B cell (primary cell): ENCODE measurements at regions of chr5 and their contacts with region 1.

Region 1: DNA sequence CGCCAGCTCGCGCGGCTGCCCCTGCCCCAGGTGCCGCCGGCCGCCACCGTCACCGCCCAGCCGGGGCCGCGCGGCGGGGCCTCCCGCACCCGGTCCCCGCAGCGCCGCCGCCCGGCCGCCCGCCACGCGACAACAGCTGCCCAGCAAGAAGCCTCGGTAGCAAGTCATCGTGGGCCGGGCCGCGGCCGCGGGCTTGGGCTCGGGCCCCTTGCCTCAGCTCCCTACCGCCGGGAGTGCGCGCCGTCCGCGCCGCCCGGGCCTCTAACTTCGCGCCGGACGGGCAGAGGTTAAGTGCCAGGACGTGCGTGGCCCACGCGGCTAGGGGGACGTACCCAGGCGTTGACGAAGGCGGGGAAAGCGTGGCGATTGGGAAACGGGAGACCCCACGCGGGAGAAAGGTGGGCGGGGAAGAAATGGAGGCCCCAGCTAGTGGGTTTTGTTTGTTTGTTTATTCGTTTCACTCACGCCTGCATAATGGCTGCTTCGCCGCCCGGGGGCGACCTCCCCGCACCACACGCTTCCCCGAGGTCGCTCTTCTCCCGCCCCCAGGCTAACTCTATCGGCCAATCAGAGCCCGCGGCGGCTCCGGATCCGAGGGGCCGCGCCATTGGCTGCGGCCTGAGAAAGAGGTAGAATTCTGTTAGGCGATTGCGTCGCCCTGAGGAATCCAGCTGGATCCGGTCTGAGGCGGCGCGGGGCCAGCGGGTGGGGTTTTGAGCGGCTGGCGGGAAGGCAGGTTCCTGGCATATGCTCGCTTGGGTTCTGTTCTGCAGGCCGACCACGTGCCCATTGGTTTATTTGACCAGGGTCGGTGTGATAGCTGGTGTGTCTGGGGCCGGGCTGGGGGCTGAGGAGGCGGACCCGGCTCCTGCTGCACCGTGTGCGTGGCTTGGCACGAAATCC is at the start of gene NADK2:
- DNase-seq: peak; percentile 96
- ATAC-seq: peak; percentile 83
- H3K4me3 ChIP-seq: peak within 1 kb of the TSS; percentile 41 to 91 (median 85)
- H3K4me3 Mint-ChIP-seq: peak within 1 kb of the TSS; percentile 92
- H3K27ac ChIP-seq: peak within 1 kb of the TSS; percentile 92 to 97
- H3K27ac Mint-ChIP-seq: peak within 1 kb of the TSS; percentile 98
- H3K4me1 ChIP-seq: peaks cover 18 to 19% of the 10 kb centered on the region in 2 donors
- H3K4me1 Mint-ChIP-seq: peaks cover 47% of the 10 kb centered on the region
- H3K27me3 ChIP-seq: no peaks in the 10 kb centered on the region
- H3K27me3 Mint-ChIP-seq: no peaks in the 10 kb centered on the region
- CTCF ChIP-seq: peak; percentile 79
- total RNA-seq, gene NADK2: 16.0 and 18.6 TPM in 2 replicates

Region 2: DNA sequence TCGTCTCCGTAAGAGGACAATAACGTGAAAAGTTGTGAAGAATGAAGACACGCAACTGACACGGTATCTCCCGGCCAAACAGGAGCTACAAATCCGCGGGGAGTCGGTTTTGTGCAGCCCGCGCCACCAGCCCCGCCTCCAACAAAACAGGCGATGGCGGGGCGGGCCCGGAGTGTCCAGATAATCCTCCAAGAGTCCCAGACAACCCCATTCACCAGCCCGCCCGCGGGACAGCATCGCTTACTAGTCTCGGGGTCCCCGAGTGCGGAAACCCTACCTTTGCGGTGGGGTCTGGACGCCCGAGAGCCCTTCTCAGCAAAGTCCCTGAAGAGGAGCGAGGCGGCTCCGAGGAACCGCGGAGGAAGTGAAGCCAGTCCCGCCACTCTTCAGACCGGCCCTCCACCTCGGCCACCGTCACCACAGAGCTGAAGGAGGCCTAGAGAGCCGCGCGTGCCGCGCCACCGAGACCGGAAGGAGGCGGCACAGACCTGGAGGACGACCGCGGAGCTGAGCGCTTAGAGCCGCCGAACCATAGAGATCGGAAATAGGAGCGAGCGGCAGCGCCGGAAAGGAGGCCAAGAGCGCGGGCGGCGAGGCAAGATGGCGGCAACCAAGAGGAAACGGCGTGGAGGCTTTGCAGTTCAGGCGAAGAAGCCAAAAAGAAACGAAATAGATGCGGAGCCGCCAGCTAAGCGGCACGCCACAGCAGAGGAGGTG is 1326.6 kb before region 1 on chr5 and contains the starts of genes BRIX1 and RAD1:
- CTCF ChIA-PET with region 1: no interaction called
- POLR2A ChIA-PET with region 1: no interaction called
- intact Hi-C with region 1: loop called (anchors 5 kb)
- DNase-seq: peak; percentile 97
- ATAC-seq: peak; percentile 99
- H3K4me3 ChIP-seq: peak within 1 kb of the TSS; percentile 82 to 99 (median 87)
- H3K4me3 Mint-ChIP-seq: no peak within 1 kb of the TSS
- H3K27ac ChIP-seq: peak within 1 kb of the TSS; percentile 57 to 80
- H3K27ac Mint-ChIP-seq: peak within 1 kb of the TSS; percentile 63
- H3K4me1 ChIP-seq: peaks cover 23 to 26% of the 10 kb centered on the region in 2 donors
- H3K4me1 Mint-ChIP-seq: peaks cover 32% of the 10 kb centered on the region
- H3K27me3 ChIP-seq: no peaks in the 10 kb centered on the region
- H3K27me3 Mint-ChIP-seq: no peaks in the 10 kb centered on the region
- CTCF ChIP-seq: no peak
- total RNA-seq, gene BRIX1: 26.4 and 29.3 TPM in 2 replicates
- total RNA-seq, gene RAD1: 25.9 and 26.1 TPM in 2 replicates

Region 3: DNA sequence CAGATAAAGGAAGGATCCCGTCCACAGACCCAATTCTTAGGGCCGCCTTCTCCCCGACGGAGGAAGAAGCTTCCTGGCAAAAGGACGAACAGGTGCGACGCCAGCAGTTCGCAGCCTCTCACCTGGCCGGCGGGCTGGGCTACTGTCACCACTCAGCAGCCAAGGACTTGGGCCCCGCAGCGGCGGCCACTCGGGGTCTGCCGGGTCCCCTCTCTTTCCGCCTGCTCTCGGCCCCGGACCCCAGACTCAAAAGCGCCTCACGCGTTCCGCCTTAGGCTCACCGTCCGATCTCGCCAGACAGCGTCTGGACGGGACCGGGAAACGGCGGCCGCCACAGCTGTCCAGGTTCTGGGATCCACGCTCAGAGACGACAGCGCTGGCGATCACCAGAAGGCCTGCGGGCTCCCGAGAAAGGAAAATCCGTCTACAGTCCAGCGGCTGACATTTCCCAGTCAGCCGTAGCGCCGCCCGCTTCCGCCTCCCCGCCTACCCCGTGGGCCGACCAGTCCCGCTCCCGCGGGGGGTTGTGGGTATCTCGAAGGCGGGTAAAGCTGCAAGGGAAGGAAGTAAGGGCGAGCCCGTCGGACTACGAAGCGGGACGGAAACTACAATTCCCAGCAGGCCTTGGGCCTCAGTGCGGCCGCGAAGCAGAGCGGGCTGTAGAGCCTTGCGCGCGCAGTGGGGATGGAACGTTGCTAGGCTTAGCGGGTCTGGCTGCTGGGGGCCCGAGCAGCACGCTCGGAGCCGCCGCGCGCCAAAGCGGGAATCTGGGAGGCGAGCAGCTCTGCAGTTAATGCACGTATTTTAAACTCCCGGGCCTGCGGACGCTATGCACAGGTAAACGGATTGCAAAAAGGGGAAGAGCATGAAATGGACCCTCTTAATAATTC is 90.2 kb before region 1 on chr5 and contains the starts of genes LMBRD2 and SKP2:
- CTCF ChIA-PET with region 1: interaction called, 16 read pairs
- POLR2A ChIA-PET with region 1: interaction called, 15 read pairs
- intact Hi-C with region 1: loop called (anchors 1 kb)
- DNase-seq: peak; percentile 96
- ATAC-seq: peak; percentile 98
- H3K4me3 ChIP-seq: peak within 1 kb of the TSS; percentile 67 to 82 (median 78)
- H3K4me3 Mint-ChIP-seq: peak within 1 kb of the TSS; percentile 95
- H3K27ac ChIP-seq: peak within 1 kb of the TSS; percentile 55 to 83
- H3K27ac Mint-ChIP-seq: peak within 1 kb of the TSS; percentile 87
- H3K4me1 ChIP-seq: peaks cover 19 to 25% of the 10 kb centered on the region in 2 donors
- H3K4me1 Mint-ChIP-seq: peaks cover 46% of the 10 kb centered on the region
- H3K27me3 ChIP-seq: no peaks in the 10 kb centered on the region
- H3K27me3 Mint-ChIP-seq: no peaks in the 10 kb centered on the region
- CTCF ChIP-seq: no peak
- total RNA-seq, gene LMBRD2: 9.9 and 10.0 TPM in 2 replicates
- total RNA-seq, gene SKP2: 26.7 and 33.0 TPM in 2 replicates

Region 4: DNA sequence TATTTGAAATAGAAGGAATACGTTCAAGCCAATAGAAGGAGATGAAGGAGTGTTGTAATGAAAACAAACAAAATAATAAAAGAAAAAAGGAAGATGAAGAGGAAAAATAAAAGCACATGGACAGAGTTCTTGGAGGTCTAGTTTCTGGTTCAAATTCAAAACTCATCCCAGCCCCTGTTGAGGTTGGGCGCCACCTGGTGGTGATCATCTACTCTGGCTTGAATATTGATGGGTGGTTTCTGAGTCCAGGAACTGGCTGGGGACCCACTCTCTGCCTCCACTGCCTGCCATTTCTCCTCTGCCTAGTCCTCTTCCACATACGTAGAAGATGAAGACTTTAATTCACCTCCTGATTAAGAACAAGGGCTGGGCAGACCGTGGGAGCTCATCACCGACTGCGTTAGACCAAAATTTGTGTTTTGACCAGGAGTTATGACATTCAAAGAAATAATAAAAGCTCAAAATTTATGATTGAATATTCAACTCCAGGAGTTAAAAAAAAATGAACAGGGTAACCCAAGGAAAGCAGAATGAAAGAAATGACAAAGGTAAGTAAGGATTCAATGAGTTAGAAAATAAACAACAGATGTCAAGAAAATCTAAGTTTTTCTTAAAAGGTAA is 265.6 kb after region 1 on chr5:
- CTCF ChIA-PET with region 1: interaction called, 5 read pairs
- POLR2A ChIA-PET with region 1: no interaction called
- intact Hi-C with region 1: loop called (anchors 1 kb)
- DNase-seq: peak; percentile 69
- ATAC-seq: peak; percentile 51
- H3K4me3 ChIP-seq: no peak overlapping the region
- H3K4me3 Mint-ChIP-seq: no peak overlapping the region
- H3K27ac ChIP-seq: no peak overlapping the region
- H3K27ac Mint-ChIP-seq: no peak overlapping the region
- H3K4me1 ChIP-seq: no peaks in the 10 kb centered on the region
- H3K4me1 Mint-ChIP-seq: no peaks in the 10 kb centered on the region
- H3K27me3 ChIP-seq: peaks cover 0 to 2% (median 0%) of the 10 kb centered on the region in 4 experiments
- H3K27me3 Mint-ChIP-seq: peaks cover 25% of the 10 kb centered on the region
- CTCF ChIP-seq: peak; percentile 87

Region 5: DNA sequence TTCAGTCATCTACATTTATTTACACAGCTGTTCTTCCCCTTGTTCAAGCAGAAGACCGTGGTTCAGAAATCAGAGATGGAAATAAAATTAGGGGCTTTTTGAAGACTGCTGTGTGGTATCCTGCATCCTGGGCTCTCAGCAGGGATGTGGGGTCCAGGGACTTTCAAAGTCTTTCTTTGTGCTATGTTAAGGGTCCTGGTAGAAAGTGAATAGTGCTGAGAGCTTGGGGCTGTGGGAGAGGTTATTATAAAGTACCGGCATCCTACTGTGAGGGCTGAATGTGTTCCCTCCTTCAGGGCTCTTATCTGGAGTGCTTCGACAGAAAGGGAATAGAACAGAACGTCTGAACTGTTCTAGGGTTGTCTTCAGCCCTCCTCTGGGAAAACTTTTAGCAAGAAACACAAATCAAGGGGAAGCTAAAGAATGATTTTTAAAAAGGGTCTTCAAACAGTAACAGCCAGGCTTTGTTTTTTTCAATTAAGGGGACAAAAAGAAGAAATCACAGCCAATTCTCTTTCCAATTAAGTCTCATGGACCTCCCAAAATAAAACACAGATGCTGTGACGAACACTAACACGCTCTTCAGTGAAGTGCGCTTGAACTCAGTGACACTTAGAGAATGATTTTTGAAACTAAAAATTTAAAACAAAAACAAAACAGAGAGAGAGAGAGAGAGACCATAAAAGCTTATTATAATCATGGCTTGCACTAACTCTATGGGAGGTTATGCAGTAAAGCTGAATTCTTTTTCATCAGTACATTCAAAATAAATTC is 348.8 kb after region 1 on chr5:
- CTCF ChIA-PET with region 1: no interaction called
- POLR2A ChIA-PET with region 1: no interaction called
- intact Hi-C with region 1: no loop called
- DNase-seq: no peak
- ATAC-seq: no peak
- H3K4me3 ChIP-seq: no peak overlapping the region
- H3K4me3 Mint-ChIP-seq: no peak overlapping the region
- H3K27ac ChIP-seq: no peak overlapping the region
- H3K27ac Mint-ChIP-seq: no peak overlapping the region
- H3K4me1 ChIP-seq: no peaks in the 10 kb centered on the region
- H3K4me1 Mint-ChIP-seq: peaks cover 4% of the 10 kb centered on the region
- H3K27me3 ChIP-seq: no peaks in the 10 kb centered on the region
- H3K27me3 Mint-ChIP-seq: peaks cover 9% of the 10 kb centered on the region
- CTCF ChIP-seq: no peak

Region 6: DNA sequence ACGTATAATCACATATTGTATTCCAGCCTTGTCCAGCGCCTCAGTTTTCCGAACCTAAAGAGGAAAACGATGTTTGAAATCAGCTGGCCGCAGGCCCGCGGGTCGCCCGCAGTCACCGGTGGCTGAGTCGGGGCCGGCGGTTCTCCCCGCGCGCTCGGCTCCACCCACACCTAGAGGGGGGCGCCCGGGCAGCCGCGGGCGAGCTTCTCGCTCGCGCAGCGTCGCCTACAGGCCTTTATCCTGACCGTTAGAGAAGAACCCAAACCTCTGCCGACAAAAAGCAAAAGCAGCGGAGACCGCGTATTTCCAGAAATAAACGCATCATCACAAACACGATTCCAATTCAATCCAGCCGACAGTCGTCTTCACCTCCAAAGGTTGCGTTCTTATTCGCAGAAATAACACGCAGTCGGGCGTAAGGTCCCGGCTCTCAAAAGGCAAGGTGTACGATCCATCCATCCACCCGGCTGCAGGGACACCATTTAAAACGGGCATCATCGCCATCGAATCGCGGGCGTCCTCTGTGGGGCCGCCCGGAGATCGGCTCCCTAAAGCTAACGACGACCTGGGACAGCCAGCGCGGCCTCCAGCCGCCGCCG is 634.0 kb after region 1 on chr5:
- CTCF ChIA-PET with region 1: no interaction called
- POLR2A ChIA-PET with region 1: interaction called, 5 read pairs
- intact Hi-C with region 1: loop called (anchors 1 kb)
- DNase-seq: peak; percentile 89
- ATAC-seq: peak; percentile 70
- H3K4me3 ChIP-seq: peak overlapping the region; percentile 85 to 99 (median 94)
- H3K4me3 Mint-ChIP-seq: peak overlapping the region; percentile 91
- H3K27ac ChIP-seq: peak overlapping the region; percentile 92 to 98
- H3K27ac Mint-ChIP-seq: peak overlapping the region; percentile 95
- H3K4me1 ChIP-seq: peaks cover 19 to 42% of the 10 kb centered on the region in 2 donors
- H3K4me1 Mint-ChIP-seq: peaks cover 40% of the 10 kb centered on the region
- H3K27me3 ChIP-seq: no peaks in the 10 kb centered on the region
- H3K27me3 Mint-ChIP-seq: no peaks in the 10 kb centered on the region
- CTCF ChIP-seq: peak; percentile 71